ENCODE measurements at regions of chr2 and their contacts with region 1.

Region 1: GRCh38 chr2:182650704-182651103 is 65.4 kb upstream of the DNAJC10 start:
- DNase-seq: peak; percentile 40
- ATAC-seq: peak; percentile 35
- H3K4me3 ChIP-seq: no peak overlapping the region
- H3K27ac ChIP-seq: no peak overlapping the region
- H3K4me1 ChIP-seq: no peaks in the 10 kb centered on the region
- H3K27me3 ChIP-seq: no peaks in the 10 kb centered on the region
- CTCF ChIP-seq: peak; percentile 22 to 65 (median 61); a peak in 3 of 6 replicates
- POLR2A ChIP-seq: no peak
- RAD21 ChIP-seq: peak; percentile 82

Region 2: GRCh38 chr2:181077128-181077709 is 1573.5 kb before region 1 on chr2:
- CTCF ChIA-PET with region 1: no interaction called
- POLR2A ChIA-PET with region 1: no interaction called
- RAD21 ChIA-PET with region 1: no interaction called
- intact Hi-C with region 1: loop called (anchors 2 kb)
- DNase-seq: peak; percentile 22
- ATAC-seq: peak; percentile 84
- H3K4me3 ChIP-seq: no peak overlapping the region
- H3K27ac ChIP-seq: no peak overlapping the region
- H3K4me1 ChIP-seq: no peaks in the 10 kb centered on the region
- H3K27me3 ChIP-seq: no peaks in the 10 kb centered on the region
- CTCF ChIP-seq: peak; percentile 42 to 77 (median 63); a peak in 5 of 6 replicates
- POLR2A ChIP-seq: no peak
- RAD21 ChIP-seq: peak; percentile 73

Region 3: GRCh38 chr2:181104512-181105115 is 1546.1 kb before region 1 on chr2:
- CTCF ChIA-PET with region 1: interaction called, 5 read pairs
- POLR2A ChIA-PET with region 1: no interaction called
- RAD21 ChIA-PET with region 1: no interaction called
- intact Hi-C with region 1: loop called (anchors 1 kb)
- DNase-seq: peak; percentile 51
- ATAC-seq: peak; percentile 57
- H3K4me3 ChIP-seq: no peak overlapping the region
- H3K27ac ChIP-seq: no peak overlapping the region
- H3K4me1 ChIP-seq: peaks cover 28 to 47% of the 10 kb centered on the region in 2 experiments
- H3K27me3 ChIP-seq: no peaks in the 10 kb centered on the region
- CTCF ChIP-seq: peak; percentile 70 to 89 (median 82); a peak in 5 of 6 replicates
- POLR2A ChIP-seq: no peak
- RAD21 ChIP-seq: peak; percentile 92

Region 4: GRCh38 chr2:181573140-181573736 is 1077.5 kb before region 1 on chr2:
- CTCF ChIA-PET with region 1: interaction called, 4 read pairs
- POLR2A ChIA-PET with region 1: no interaction called
- RAD21 ChIA-PET with region 1: no interaction called
- intact Hi-C with region 1: loop called (anchors 5 kb)
- DNase-seq: peak; percentile 54
- ATAC-seq: peak; percentile 82
- H3K4me3 ChIP-seq: no peak overlapping the region
- H3K27ac ChIP-seq: no peak overlapping the region
- H3K4me1 ChIP-seq: peaks cover 0 to 5% of the 10 kb centered on the region in 2 experiments; a peak in 2 of 4 replicates
- H3K27me3 ChIP-seq: no peaks in the 10 kb centered on the region
- CTCF ChIP-seq: peak; percentile 49 to 74 (median 68); a peak in 4 of 6 replicates
- POLR2A ChIP-seq: no peak
- RAD21 ChIP-seq: peak; percentile 84

Region 5: GRCh38 chr2:182186132-182186735 is 464.5 kb before region 1 on chr2:
- CTCF ChIA-PET with region 1: interaction called, 68 read pairs
- POLR2A ChIA-PET with region 1: no interaction called
- RAD21 ChIA-PET with region 1: interaction called in 1 of 2 experiments, 12 read pairs
- intact Hi-C with region 1: loop called (anchors 1 kb)
- DNase-seq: peak; percentile 27
- ATAC-seq: peak; percentile 72
- H3K4me3 ChIP-seq: no peak overlapping the region
- H3K27ac ChIP-seq: no peak overlapping the region
- H3K4me1 ChIP-seq: no peaks in the 10 kb centered on the region
- H3K27me3 ChIP-seq: no peaks in the 10 kb centered on the region
- CTCF ChIP-seq: peak; percentile 43 to 87 (median 74); a peak in 5 of 6 replicates
- POLR2A ChIP-seq: no peak
- RAD21 ChIP-seq: peak; percentile 90

Region 6: GRCh38 chr2:182240862-182241371 is 409.8 kb before region 1 on chr2:
- CTCF ChIA-PET with region 1: interaction called, 25 read pairs
- POLR2A ChIA-PET with region 1: interaction called, 3 read pairs
- RAD21 ChIA-PET with region 1: interaction called in 1 of 2 experiments, 4 read pairs
- intact Hi-C with region 1: loop called (anchors 1 kb)
- DNase-seq: peak; percentile 38
- ATAC-seq: peak; percentile 94
- H3K4me3 ChIP-seq: no peak overlapping the region
- H3K27ac ChIP-seq: no peak overlapping the region
- H3K4me1 ChIP-seq: peaks cover 0 to 4% of the 10 kb centered on the region in 2 experiments; a peak in 1 of 4 replicates
- H3K27me3 ChIP-seq: no peaks in the 10 kb centered on the region
- CTCF ChIP-seq: peak; percentile 49 to 68 (median 59); a peak in 5 of 6 replicates
- POLR2A ChIP-seq: no peak
- RAD21 ChIP-seq: peak; percentile 58

Region 7: GRCh38 chr2:182359990-182360662 is 290.6 kb before region 1 on chr2:
- CTCF ChIA-PET with region 1: no interaction called
- POLR2A ChIA-PET with region 1: no interaction called
- RAD21 ChIA-PET with region 1: no interaction called
- intact Hi-C with region 1: no loop called
- DNase-seq: no peak
- ATAC-seq: no peak
- H3K4me3 ChIP-seq: no peak overlapping the region
- H3K27ac ChIP-seq: no peak overlapping the region
- H3K4me1 ChIP-seq: no peaks in the 10 kb centered on the region
- H3K27me3 ChIP-seq: no peaks in the 10 kb centered on the region
- CTCF ChIP-seq: no peak
- POLR2A ChIP-seq: no peak
- RAD21 ChIP-seq: no peak

Region 8: DNA sequence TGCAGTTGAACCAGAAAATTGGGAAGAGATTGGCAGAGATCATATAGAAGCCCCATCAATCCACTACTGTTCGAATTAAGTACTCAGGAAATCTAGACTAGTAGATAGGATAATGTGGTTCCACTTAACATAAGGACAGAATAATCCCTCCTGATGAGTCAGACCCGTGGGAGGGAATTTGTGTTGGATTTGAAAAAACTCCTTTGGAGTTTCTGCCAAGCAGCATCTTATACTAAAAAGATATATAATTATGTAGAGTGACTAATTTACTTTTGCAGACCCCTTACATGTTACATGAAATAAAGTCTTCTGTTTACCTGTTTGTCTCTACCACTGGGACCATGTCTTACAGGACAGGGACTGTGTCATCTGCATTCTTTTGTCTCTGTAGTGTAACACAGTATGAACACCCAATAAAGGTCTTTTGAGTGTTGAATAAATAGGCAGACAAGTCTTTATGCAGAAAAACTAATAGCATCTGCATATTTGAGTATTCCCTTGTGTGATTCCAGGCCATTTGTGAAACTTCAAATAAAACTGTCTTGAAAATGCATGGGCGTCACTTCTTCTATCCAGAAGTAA is 57.2 kb before region 1 on chr2:
- CTCF ChIA-PET with region 1: interaction called, 4 read pairs
- POLR2A ChIA-PET with region 1: no interaction called
- RAD21 ChIA-PET with region 1: no interaction called
- intact Hi-C with region 1: loop called (anchors 5 kb)
- DNase-seq: no peak
- ATAC-seq: peak; percentile 71
- H3K4me3 ChIP-seq: no peak overlapping the region
- H3K27ac ChIP-seq: no peak overlapping the region
- H3K4me1 ChIP-seq: peaks cover 3 to 17% of the 10 kb centered on the region in 2 experiments; a peak in 3 of 4 replicates
- H3K27me3 ChIP-seq: no peaks in the 10 kb centered on the region
- CTCF ChIP-seq: no peak; a peak in 1 of 6 replicates
- POLR2A ChIP-seq: no peak
- RAD21 ChIP-seq: no peak